Right ventricle myocardium inferior (tissue), 1 donor: ENCODE measurements at regions of chr5 and their contacts with region 1.

Region 1: DNA sequence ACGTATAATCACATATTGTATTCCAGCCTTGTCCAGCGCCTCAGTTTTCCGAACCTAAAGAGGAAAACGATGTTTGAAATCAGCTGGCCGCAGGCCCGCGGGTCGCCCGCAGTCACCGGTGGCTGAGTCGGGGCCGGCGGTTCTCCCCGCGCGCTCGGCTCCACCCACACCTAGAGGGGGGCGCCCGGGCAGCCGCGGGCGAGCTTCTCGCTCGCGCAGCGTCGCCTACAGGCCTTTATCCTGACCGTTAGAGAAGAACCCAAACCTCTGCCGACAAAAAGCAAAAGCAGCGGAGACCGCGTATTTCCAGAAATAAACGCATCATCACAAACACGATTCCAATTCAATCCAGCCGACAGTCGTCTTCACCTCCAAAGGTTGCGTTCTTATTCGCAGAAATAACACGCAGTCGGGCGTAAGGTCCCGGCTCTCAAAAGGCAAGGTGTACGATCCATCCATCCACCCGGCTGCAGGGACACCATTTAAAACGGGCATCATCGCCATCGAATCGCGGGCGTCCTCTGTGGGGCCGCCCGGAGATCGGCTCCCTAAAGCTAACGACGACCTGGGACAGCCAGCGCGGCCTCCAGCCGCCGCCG is 680 bp upstream of the NIPBL start:
- DNase-seq: peak; percentile 91
- ATAC-seq: peak; percentile 91

Region 2: GRCh38 chr5:36739751-36740221 is 136.1 kb before region 1 on chr5:
- intact Hi-C with region 1: loop called (anchors 5 kb)
- DNase-seq: peak; percentile 71
- ATAC-seq: peak; percentile 52

Region 3: GRCh38 chr5:36908544-36909260 is 32.8 kb after region 1 on chr5:
- intact Hi-C with region 1: no loop called
- DNase-seq: no peak
- ATAC-seq: no peak

Region 4: GRCh38 chr5:36928947-36929346 is 53.1 kb after region 1 on chr5:
- intact Hi-C with region 1: loop called (anchors 5 kb)
- DNase-seq: no peak
- ATAC-seq: no peak

Region 5: GRCh38 chr5:36944607-36945225 is 68.8 kb after region 1 on chr5:
- intact Hi-C with region 1: loop called (anchors 2 kb)
- DNase-seq: no peak
- ATAC-seq: no peak